ENCODE measurements at regions of chr1 and their contacts with region 1.

Region 1: DNA sequence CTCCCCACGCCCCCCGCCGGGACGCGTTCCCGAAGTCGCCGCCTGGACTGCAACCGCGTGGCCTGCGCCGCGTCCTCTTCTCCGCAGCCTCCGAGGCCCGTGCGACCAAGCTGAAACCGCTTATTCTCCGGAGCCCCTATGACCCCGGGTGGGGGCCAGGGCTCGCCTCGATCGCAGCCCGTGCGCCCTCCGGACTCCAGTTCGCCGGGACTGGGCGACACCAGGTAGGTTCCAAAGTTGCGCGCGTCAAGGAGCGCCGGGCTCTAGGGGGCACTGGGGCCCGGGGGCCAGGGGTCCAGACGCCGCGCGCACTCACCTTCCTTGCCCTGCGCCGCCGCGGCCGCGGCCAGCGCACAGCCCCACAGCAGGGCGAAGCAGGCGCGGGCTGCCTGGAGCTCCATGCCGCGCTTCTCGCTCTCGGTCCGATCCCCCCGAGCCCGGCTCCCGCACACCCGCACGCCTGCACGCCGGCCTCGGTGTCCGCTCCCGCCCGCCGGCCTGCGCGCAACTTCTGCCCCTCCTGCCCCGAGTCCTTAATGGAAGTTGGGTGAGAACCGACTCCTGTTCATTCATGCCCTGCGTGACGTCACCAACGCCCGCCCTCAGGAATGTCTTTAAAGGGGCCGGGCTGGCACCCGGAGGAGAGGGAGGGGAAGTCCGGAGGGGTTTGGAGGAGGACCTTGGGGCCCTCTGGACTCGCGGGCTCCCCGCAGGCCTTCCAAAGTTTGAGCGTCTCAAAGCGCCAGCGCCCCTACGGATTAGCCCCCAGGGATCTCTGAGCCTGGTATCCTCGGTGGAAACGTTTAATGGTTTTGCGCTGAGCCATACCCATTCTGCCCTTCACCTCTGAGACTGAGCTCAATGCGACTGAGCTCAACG is at the start of gene EPHA2:
- DNase-seq: peak; percentile 91
- H3K4me3 ChIP-seq: peak within 1 kb of the TSS; percentile 87 to 97 (median 89)
- H3K27ac ChIP-seq: peak within 1 kb of the TSS; percentile 84
- H3K4me1 ChIP-seq: peaks cover 54% of the 10 kb centered on the region
- H3K27me3 ChIP-seq: no peaks in the 10 kb centered on the region
- CTCF ChIP-seq: no peak
- total RNA-seq, gene EPHA2: 77.3 to 181 TPM

Region 2: GRCh38 chr1:16122916-16123315 is 32.9 kb before region 1 on chr1:
- CTCF ChIA-PET with region 1: no interaction called
- dilution Hi-C with region 1: loop called (anchors 5 kb)
- in situ Hi-C with region 1: no loop called
- intact Hi-C with region 1: loop called (anchors 2 kb)
- DNase-seq: peak; percentile 97
- H3K4me3 ChIP-seq: no peak overlapping the region
- H3K27ac ChIP-seq: peak overlapping the region; percentile 43
- H3K4me1 ChIP-seq: peaks cover 43% of the 10 kb centered on the region
- H3K27me3 ChIP-seq: no peaks in the 10 kb centered on the region
- CTCF ChIP-seq: no peak

Region 3: DNA sequence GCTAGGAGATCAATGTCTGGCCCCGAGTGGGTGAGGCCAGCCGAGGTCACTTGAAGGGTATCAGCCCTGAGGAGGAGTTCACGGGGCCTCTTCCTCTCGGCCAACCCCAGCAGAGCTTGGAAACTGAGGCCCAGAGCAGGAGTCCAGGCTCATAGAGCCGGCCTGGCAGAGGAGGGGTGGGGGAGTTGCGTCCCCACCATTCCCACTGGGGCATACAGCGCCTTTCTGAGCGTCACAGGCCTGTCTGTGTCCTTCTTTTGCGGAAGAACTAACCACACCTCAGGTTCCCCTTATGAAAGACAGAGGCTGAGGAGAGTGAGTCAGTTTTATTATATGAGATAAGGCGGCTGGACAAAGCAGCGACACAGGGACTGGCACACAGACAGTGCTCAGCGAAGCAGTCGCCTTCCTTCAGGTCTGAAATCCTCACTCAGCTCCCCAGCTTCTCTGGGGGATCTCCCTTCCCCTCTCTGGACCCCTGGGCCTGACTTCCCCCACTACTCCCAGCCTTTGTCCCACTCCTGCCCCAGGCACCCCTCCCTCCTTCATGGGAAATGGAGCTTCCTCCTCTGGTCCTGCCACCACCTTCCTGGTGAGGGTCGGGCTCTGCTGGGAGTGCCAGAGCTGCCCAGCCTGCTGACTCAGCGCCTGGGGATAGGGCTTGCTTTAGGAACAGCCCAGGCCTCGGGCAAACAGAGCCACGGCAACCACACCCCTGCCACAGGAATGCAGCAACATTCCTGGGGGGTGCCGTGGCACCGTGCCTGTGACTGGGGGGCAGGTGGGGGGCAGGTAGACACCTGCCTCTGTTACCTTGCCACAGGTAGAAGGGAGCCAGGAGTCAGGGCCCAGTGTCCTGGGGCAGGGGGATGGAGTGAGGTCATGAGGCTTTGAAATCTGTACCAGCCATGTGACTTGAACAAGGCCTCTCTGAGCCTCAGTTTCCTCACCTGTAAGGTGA is 17.5 kb after region 1 on chr1:
- CTCF ChIA-PET with region 1: no interaction called
- dilution Hi-C with region 1: no loop called
- in situ Hi-C with region 1: no loop called
- intact Hi-C with region 1: loop called (anchors 1 kb)
- DNase-seq: peak; percentile 97
- H3K4me3 ChIP-seq: no peak overlapping the region
- H3K27ac ChIP-seq: peak overlapping the region; percentile 97
- H3K4me1 ChIP-seq: peaks cover 52% of the 10 kb centered on the region
- H3K27me3 ChIP-seq: no peaks in the 10 kb centered on the region
- CTCF ChIP-seq: no peak